Naive thymus-derived CD4-positive, alpha-beta T cell (primary cell): ENCODE measurements at regions of chr2 and their contacts with region 1.

Region 1: GRCh38 chr2:190534310-190535120 is at the start of gene NEMP2:
- DNase-seq: peak; percentile 72 to 88 (median 78)
- ATAC-seq: peak; percentile 83
- H3K4me3 ChIP-seq: peak within 1 kb of the TSS; percentile 73
- H3K4me3 Mint-ChIP-seq: peak within 1 kb of the TSS; percentile 91 to 99 (median 97)
- H3K27ac ChIP-seq: peak within 1 kb of the TSS; percentile 96
- H3K27ac Mint-ChIP-seq: peak within 1 kb of the TSS; percentile 99 to 100 (median 100)
- H3K4me1 ChIP-seq: peaks cover 20 to 36% of the 10 kb centered on the region in 2 donors
- H3K4me1 Mint-ChIP-seq: peaks cover 19 to 63% (median 60%) of the 10 kb centered on the region in 7 donors
- H3K27me3 ChIP-seq: no peaks in the 10 kb centered on the region
- H3K27me3 Mint-ChIP-seq: no peaks in the 10 kb centered on the region
- total RNA-seq, gene NEMP2: 11.1 to 30.8 (median 18.4) TPM

Region 2: DNA sequence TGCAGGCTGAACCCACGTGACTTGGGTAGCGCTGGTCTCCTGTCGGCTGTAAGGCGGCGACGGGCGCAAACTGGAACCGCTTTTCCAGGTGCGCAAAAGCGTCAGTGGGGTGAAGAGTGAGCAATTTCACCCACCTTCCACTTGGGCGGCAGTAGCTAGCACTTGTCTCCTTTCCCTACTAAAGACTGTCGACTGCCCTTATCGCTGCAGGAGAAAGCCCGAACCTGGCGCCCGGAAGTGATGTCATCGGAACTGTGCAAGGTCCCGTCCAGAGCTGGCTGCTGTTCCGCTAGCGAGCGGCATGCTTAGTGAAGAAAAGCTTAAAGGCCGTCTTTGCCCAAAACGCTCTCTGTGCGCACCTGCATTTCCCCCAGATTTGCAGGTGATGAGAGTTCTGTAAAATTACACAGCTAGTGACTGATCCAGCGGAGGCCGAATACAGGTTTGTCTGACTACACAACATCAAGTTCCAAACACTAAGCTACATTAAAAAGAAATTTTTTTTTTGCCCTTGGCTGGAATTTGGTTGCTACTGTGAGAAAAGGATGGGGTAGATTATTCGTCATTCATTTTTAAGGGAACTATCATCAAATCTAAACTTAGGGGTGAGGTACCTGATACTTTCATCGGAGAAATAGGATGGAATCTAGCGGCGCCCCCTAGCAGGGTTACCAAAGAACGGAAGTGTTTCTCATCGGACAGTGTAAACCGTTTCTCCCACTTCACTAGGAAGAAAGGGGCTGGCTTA is 771.8 kb before region 1 on chr2 and contains the start of gene OSGEPL1:
- CTCF ChIA-PET with region 1: no interaction called
- POLR2A ChIA-PET with region 1: no interaction called
- intact Hi-C with region 1: loop called (anchors 1 to 5 kb)
- DNase-seq: peak; percentile 72 to 95 (median 88)
- ATAC-seq: peak; percentile 95
- H3K4me3 ChIP-seq: peak within 1 kb of the TSS; percentile 88
- H3K4me3 Mint-ChIP-seq: peak within 1 kb of the TSS; percentile 88 to 98 (median 94)
- H3K27ac ChIP-seq: peak within 1 kb of the TSS; percentile 89
- H3K27ac Mint-ChIP-seq: peak within 1 kb of the TSS; percentile 94 to 98 (median 96)
- H3K4me1 ChIP-seq: peaks cover 6 to 10% of the 10 kb centered on the region in 2 donors
- H3K4me1 Mint-ChIP-seq: peaks cover 4 to 18% (median 9%) of the 10 kb centered on the region in 7 donors
- H3K27me3 ChIP-seq: no peaks in the 10 kb centered on the region
- H3K27me3 Mint-ChIP-seq: no peaks in the 10 kb centered on the region
- total RNA-seq, gene OSGEPL1: 6.8 to 24.2 (median 7.2) TPM

Region 3: DNA sequence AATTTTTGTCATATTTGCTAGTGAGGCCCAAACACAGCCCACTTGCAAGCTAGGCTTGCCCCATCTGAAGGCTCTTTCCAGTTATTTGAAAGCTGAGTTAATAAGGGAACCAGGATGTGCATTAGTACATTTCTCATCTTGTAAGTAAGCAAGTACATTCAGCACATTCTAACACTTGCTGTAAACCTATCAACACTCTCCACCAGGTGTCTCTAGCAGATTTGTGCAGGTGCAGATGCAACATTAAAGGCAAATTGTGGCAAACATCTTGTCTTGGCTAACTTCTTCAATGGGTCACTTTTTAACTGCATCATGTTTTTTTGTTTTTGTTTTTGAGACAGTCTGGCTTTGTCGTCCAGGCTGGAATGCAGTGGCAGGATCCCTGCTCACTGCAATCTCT is 151.7 kb before region 1 on chr2:
- CTCF ChIA-PET with region 1: interaction called, 3 read pairs
- POLR2A ChIA-PET with region 1: interaction called, 3 read pairs
- intact Hi-C with region 1: loop called in 1 of 2 experiments (anchors 1 kb)
- DNase-seq: peak in 7 of 9 donors; percentile 48 to 74 (median 65)
- ATAC-seq: peak; percentile 84
- H3K4me3 ChIP-seq: no peak overlapping the region
- H3K4me3 Mint-ChIP-seq: no peak overlapping the region
- H3K27ac ChIP-seq: no peak overlapping the region
- H3K27ac Mint-ChIP-seq: peak overlapping the region in 2 of 9 donors; percentile 28 to 68
- H3K4me1 ChIP-seq: no peaks in the 10 kb centered on the region
- H3K4me1 Mint-ChIP-seq: peaks cover 0 to 6% (median 0%) of the 10 kb centered on the region in 7 donors
- H3K27me3 ChIP-seq: no peaks in the 10 kb centered on the region
- H3K27me3 Mint-ChIP-seq: peaks cover 0 to 2% (median 0%) of the 10 kb centered on the region in 5 donors

Region 4: DNA sequence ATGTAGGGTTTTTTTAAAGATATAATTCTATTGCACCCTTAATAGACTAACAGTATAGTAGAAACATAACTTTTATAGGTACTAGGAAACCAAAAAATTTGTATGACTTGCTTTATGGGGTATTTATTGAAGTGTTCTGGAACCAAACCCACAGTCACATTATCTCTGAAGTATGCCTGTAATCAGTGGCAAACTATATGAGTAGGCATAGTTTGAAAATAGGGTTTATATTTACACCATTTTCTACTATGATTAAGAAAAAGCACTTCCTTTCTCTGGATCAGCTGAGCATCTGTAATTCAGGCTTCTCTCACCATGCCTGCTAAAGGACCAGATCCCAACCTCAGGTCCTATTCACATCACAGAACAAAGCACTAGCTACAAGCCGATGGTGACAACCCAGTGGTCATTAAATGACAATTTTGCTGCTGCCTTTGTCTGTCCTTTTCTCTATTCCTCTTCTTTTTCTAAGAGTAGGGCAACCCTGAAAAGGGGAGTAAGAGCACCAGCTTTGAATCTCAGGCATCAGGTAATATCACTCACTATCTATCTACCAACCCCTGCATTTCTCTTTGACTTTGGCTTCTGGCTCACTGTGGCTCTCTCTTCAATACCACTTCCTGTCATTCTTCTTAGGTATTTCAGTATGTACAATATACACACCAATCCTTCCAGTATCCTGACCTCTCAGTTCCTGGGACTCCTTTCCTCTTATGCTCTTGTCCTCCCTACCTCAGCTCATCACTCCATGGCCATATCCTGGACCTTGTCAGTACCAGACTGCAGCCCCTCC is 14.3 kb before region 1 on chr2:
- CTCF ChIA-PET with region 1: no interaction called
- POLR2A ChIA-PET with region 1: interaction called, 47 read pairs
- intact Hi-C with region 1: loop called (anchors 1 kb)
- DNase-seq: peak in 5 of 9 donors; percentile 26 to 48 (median 41)
- ATAC-seq: peak; percentile 73
- H3K4me3 ChIP-seq: peak overlapping the region; percentile 8
- H3K4me3 Mint-ChIP-seq: peak overlapping the region; percentile 14 to 62 (median 47)
- H3K27ac ChIP-seq: no peak overlapping the region
- H3K27ac Mint-ChIP-seq: peak overlapping the region; percentile 24 to 72 (median 47)
- H3K4me1 ChIP-seq: peaks cover 26 to 31% of the 10 kb centered on the region in 2 donors
- H3K4me1 Mint-ChIP-seq: peaks cover 24 to 69% (median 47%) of the 10 kb centered on the region in 7 donors
- H3K27me3 ChIP-seq: no peaks in the 10 kb centered on the region
- H3K27me3 Mint-ChIP-seq: no peaks in the 10 kb centered on the region

Region 5: DNA sequence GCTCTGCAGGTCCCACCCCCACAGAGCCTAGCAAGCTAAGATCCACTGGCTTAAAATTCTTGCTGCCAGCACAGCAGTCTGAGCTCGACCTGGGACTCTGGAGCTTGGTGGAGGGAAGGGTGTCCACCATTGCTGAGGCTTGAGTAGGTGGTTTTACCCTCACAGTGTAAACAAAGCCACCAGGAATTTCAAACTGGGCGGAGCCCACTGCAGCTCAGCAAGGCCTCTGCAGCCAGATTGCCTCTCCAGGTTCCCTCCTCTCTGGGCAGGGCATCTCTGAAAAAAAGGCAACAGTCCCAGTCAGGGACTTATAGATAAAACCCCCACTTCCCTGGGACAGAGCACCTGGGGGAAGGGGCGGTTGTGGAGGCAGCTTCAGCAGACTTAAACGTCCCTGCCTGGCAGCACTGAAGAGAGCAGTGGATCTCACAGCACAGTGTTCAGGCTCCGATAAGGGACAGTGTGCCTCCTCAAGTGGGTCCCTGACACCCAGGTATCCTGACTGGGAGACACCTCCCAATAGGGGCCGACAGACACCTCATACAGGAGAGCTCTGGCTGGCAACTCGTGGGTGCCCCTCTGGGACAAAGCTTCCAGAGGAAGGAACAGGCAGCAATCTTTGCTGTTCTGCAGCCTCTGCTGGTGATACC is 20.0 kb after region 1 on chr2:
- CTCF ChIA-PET with region 1: no interaction called
- POLR2A ChIA-PET with region 1: no interaction called
- intact Hi-C with region 1: no loop called
- DNase-seq: no peak
- ATAC-seq: no peak
- H3K4me3 ChIP-seq: no peak overlapping the region
- H3K4me3 Mint-ChIP-seq: no peak overlapping the region
- H3K27ac ChIP-seq: no peak overlapping the region
- H3K27ac Mint-ChIP-seq: no peak overlapping the region
- H3K4me1 ChIP-seq: no peaks in the 10 kb centered on the region
- H3K4me1 Mint-ChIP-seq: peaks cover 9 to 14% (median 11%) of the 10 kb centered on the region in 7 donors
- H3K27me3 ChIP-seq: no peaks in the 10 kb centered on the region
- H3K27me3 Mint-ChIP-seq: no peaks in the 10 kb centered on the region

Region 6: DNA sequence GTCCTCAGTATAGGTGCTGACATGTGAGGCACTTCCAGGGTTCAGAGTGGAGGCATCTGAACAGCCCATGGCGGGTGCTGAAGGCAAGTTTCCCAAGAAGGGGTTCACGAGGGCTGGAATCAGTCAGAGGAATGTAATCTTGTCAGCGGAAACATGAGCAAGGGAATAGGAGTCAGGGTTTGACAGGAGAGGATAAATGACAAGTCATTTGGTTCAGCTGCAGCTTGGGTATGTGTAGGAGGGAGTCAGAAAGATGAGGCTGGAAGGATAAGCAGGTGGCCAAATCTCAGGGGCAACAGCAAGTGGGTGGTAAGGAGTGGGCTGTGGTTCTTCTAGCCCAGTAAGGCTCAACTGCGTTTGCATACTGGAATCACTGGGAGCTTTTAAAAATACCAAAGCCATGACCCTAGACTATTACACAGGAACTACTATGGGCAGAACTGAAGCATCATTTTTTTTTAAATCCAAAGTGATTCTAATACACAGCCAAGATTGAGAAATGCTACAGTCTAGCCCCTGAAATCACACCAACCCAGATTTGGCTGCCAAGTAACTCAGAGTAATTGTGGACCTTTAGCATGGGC is 72.6 kb after region 1 on chr2:
- CTCF ChIA-PET with region 1: no interaction called
- POLR2A ChIA-PET with region 1: no interaction called
- intact Hi-C with region 1: no loop called
- DNase-seq: no peak
- ATAC-seq: no peak
- H3K4me3 ChIP-seq: no peak overlapping the region
- H3K4me3 Mint-ChIP-seq: no peak overlapping the region
- H3K27ac ChIP-seq: no peak overlapping the region
- H3K27ac Mint-ChIP-seq: peak overlapping the region in 1 of 9 donors; percentile 74
- H3K4me1 ChIP-seq: no peaks in the 10 kb centered on the region
- H3K4me1 Mint-ChIP-seq: no peaks in the 10 kb centered on the region
- H3K27me3 ChIP-seq: no peaks in the 10 kb centered on the region
- H3K27me3 Mint-ChIP-seq: no peaks in the 10 kb centered on the region

Region 7: DNA sequence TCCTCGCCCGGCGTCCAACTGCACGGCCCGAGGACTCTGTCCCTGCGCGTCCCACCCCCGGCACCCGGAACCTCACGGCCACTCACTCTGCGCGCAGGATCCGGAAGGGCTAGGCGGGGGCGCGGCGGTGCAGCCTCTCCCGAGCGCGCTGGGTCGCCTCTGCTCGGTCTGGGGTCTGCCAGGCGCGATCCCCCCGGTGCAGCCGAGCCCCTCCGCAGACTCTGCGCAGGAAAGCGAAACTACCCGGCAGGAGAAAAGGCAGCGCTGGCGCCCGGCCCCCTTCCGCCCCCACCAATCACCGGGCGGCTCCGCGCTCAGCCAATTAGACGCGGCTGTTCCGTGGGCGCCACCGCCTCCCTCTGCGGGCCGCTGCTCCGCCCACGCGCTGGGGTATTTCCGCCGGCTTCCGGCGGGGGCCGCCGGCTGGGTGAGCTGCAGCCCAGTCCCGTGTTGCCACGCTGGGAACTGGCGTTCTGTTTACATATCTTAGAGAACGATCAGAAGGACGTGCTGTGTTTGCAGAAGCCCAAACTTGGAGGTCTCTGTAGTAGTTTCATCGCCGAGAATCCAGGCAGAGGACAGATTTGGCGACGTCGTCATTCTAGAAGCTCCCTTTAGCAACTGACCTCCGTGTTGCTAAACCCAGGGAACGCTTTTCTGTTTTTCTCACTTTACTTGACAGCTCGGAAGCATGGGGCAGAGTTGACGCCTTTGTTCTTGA is 479.6 kb after region 1 on chr2 and contains the start of gene STAT1:
- CTCF ChIA-PET with region 1: interaction called, 3 read pairs
- POLR2A ChIA-PET with region 1: no interaction called
- intact Hi-C with region 1: loop called in 1 of 2 experiments (anchors 5 kb)
- DNase-seq: peak; percentile 93 to 99 (median 97)
- ATAC-seq: peak; percentile 97
- H3K4me3 ChIP-seq: peak within 1 kb of the TSS; percentile 69
- H3K4me3 Mint-ChIP-seq: no peak within 1 kb of the TSS
- H3K27ac ChIP-seq: peak within 1 kb of the TSS; percentile 87
- H3K27ac Mint-ChIP-seq: no peak within 1 kb of the TSS
- H3K4me1 ChIP-seq: peaks cover 41 to 48% of the 10 kb centered on the region in 2 donors
- H3K4me1 Mint-ChIP-seq: peaks cover 23 to 51% (median 42%) of the 10 kb centered on the region in 7 donors
- H3K27me3 ChIP-seq: no peaks in the 10 kb centered on the region
- H3K27me3 Mint-ChIP-seq: no peaks in the 10 kb centered on the region
- total RNA-seq, gene STAT1: 74.1 to 1,177 (median 89.6) TPM